ENCODE measurements at regions of chr18 and their contacts with region 1.

Region 1: GRCh38 chr18:35407871-35408481 is 30.8 kb upstream of the ZNF396 start:
- DNase-seq: peak; percentile 80
- H3K4me3 ChIP-seq: no peak overlapping the region
- H3K27ac ChIP-seq: peak overlapping the region; percentile 34
- H3K4me1 ChIP-seq: peaks cover 4% of the 10 kb centered on the region
- H3K27me3 ChIP-seq: no peaks in the 10 kb centered on the region
- CTCF ChIP-seq: peak; percentile 58 to 69
- POLR2A ChIP-seq: no peak

Region 2: GRCh38 chr18:35231052-35231451 is 176.9 kb before region 1 on chr18:
- CTCF ChIA-PET with region 1: no interaction called
- POLR2A ChIA-PET with region 1: no interaction called
- dilution Hi-C with region 1: no loop called
- intact Hi-C with region 1: loop called (anchors 1 kb)
- DNase-seq: peak; percentile 79
- H3K4me3 ChIP-seq: no peak overlapping the region
- H3K27ac ChIP-seq: no peak overlapping the region
- H3K4me1 ChIP-seq: no peaks in the 10 kb centered on the region
- H3K27me3 ChIP-seq: no peaks in the 10 kb centered on the region
- CTCF ChIP-seq: peak; percentile 78 to 82
- POLR2A ChIP-seq: no peak

Region 3: GRCh38 chr18:35497370-35498197 is 89.6 kb after region 1 on chr18 and contains the start of gene INO80C:
- CTCF ChIA-PET with region 1: interaction called, 3 read pairs
- POLR2A ChIA-PET with region 1: no interaction called
- dilution Hi-C with region 1: no loop called
- intact Hi-C with region 1: loop called (anchors 1 kb)
- DNase-seq: peak; percentile 96
- H3K4me3 ChIP-seq: peak within 1 kb of the TSS; percentile 60 to 89 (median 73)
- H3K27ac ChIP-seq: peak within 1 kb of the TSS; percentile 93
- H3K4me1 ChIP-seq: peaks cover 23% of the 10 kb centered on the region
- H3K27me3 ChIP-seq: no peaks in the 10 kb centered on the region
- CTCF ChIP-seq: no peak
- POLR2A ChIP-seq: peak; percentile 88
- total RNA-seq, gene INO80C: 51.4 and 56.0 TPM in 2 replicates

Region 4: GRCh38 chr18:35580701-35581539 is 172.9 kb after region 1 on chr18:
- CTCF ChIA-PET with region 1: no interaction called
- POLR2A ChIA-PET with region 1: no interaction called
- dilution Hi-C with region 1: no loop called
- intact Hi-C with region 1: loop called (anchors 1 kb)
- DNase-seq: peak; percentile 58
- H3K4me3 ChIP-seq: peak overlapping the region; percentile 67 to 70 (median 67)
- H3K27ac ChIP-seq: peak overlapping the region; percentile 84
- H3K4me1 ChIP-seq: peaks cover 11% of the 10 kb centered on the region
- H3K27me3 ChIP-seq: no peaks in the 10 kb centered on the region
- CTCF ChIP-seq: no peak
- POLR2A ChIP-seq: no peak

Region 5: DNA sequence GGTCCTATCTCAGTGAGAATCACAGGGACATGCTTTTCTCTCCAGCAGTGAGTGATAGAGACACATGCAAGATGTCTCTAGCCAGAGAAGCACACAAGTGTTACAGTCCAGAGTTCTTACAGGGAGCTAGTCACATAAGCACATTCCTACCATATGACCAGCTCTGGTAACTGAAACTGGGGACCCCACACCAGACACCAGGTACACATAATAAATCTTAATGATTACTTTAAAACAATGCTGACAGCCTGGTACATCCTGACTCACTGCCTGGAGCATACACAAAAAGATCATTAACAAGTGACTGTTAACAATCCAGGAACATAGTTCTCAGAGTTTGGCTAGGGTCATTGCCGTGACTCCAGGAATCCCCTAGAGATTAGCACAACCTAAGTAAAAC is 227.2 kb after region 1 on chr18:
- CTCF ChIA-PET with region 1: no interaction called
- POLR2A ChIA-PET with region 1: no interaction called
- dilution Hi-C with region 1: no loop called
- intact Hi-C with region 1: loop called (anchors 5 kb)
- DNase-seq: peak; percentile 70
- H3K4me3 ChIP-seq: no peak overlapping the region
- H3K27ac ChIP-seq: peak overlapping the region; percentile 67
- H3K4me1 ChIP-seq: peaks cover 25% of the 10 kb centered on the region
- H3K27me3 ChIP-seq: no peaks in the 10 kb centered on the region
- CTCF ChIP-seq: no peak
- POLR2A ChIP-seq: no peak

Region 6: DNA sequence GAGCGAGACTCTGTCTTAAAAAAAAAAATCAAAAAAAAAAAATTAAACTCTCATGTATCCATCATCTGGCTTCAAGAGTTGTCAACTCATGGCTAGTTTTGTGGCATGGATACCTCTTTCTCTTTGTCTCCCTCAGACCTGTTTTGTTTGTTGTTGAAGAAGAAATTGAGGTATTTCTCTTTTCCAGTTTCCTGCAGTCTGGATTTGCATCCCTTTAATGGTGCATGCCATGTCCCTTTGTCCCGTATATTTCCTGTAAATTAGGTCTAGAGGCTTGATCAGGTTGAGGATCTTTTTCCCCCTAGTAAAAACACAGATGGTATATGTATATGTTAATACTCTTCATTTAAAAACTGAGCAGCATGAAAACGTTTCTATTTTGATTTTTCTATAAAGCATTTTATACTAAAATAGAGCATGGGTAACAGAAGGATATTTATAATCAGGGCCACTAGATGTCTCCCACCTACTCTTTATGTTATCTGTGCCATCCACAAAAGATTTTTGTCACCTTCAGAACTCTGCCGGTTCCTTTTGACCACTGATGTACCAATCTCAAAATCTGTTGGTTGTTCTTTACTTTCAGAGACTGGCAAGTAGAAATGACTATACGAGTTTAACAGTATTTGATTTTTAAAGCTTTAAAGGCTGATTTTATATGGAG is 253.6 kb after region 1 on chr18:
- CTCF ChIA-PET with region 1: no interaction called
- POLR2A ChIA-PET with region 1: no interaction called
- dilution Hi-C with region 1: no loop called
- intact Hi-C with region 1: loop called (anchors 1 kb)
- DNase-seq: peak; percentile 47
- H3K4me3 ChIP-seq: no peak overlapping the region
- H3K27ac ChIP-seq: no peak overlapping the region
- H3K4me1 ChIP-seq: peaks cover 15% of the 10 kb centered on the region
- H3K27me3 ChIP-seq: no peaks in the 10 kb centered on the region
- CTCF ChIP-seq: no peak
- POLR2A ChIP-seq: no peak

Region 7: GRCh38 chr18:35851286-35851970 is 443.5 kb after region 1 on chr18:
- CTCF ChIA-PET with region 1: no interaction called
- POLR2A ChIA-PET with region 1: no interaction called
- dilution Hi-C with region 1: no loop called
- intact Hi-C with region 1: loop called (anchors 5 kb)
- DNase-seq: no peak
- H3K4me3 ChIP-seq: no peak overlapping the region
- H3K27ac ChIP-seq: no peak overlapping the region
- H3K4me1 ChIP-seq: no peaks in the 10 kb centered on the region
- H3K27me3 ChIP-seq: peaks cover 0 to 5% of the 10 kb centered on the region in 2 experiments
- CTCF ChIP-seq: no peak
- POLR2A ChIP-seq: no peak